ENCODE measurements at regions of chr13 and their contacts with region 1.

Region 1: DNA sequence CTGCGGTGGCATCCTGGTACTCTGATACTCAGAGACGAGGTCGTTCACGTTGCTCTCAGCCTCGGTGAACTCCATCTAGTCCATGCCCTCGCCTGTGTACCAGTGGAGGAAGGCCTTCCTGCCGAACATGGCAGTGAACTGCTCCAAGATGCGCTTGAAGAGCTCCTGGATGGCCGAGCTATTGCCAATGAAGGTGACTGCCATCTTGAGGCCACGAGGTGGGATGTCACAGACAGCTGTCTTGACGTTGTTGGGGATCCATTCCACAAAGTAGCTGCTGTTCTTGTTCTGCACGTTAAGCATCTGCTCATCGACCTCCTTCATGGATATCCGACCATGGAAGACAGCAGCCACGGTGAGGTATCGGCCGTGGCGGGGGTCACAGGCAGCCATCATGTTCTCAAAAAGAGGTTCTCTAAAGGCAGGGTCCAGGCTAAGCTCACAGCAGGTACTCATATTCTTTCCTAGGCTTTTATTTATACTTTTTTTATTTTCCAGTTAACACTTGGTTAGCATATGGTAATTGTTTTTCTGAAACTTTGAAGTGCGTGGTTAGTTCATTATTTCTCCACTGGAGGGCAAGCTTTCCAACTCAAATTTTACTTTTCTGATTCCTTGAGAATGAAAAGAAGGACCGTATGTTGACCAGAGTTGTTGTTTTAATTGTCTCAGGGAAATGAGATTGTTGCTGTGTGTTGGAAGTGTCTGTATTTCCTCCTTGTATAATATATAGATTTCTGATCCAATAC is 72.4 kb upstream of the RGCC start:
- DNase-seq: no peak
- H3K4me3 ChIP-seq: no peak overlapping the region
- H3K27ac ChIP-seq: no peak overlapping the region
- H3K4me1 ChIP-seq: no peaks in the 10 kb centered on the region
- H3K27me3 ChIP-seq: no peaks in the 10 kb centered on the region
- CTCF ChIP-seq: peak in 4 of 6 experiments; percentile 28 to 45 (median 44)
- POLR2A ChIP-seq: no peak

Region 2: GRCh38 chr13:41443966-41444365 is 59.0 kb after region 1 on chr13:
- intact Hi-C with region 1: no loop called
- DNase-seq: no peak
- H3K4me3 ChIP-seq: no peak overlapping the region
- H3K27ac ChIP-seq: no peak overlapping the region
- H3K4me1 ChIP-seq: no peaks in the 10 kb centered on the region
- H3K27me3 ChIP-seq: no peaks in the 10 kb centered on the region
- CTCF ChIP-seq: no peak
- POLR2A ChIP-seq: no peak

Region 3: DNA sequence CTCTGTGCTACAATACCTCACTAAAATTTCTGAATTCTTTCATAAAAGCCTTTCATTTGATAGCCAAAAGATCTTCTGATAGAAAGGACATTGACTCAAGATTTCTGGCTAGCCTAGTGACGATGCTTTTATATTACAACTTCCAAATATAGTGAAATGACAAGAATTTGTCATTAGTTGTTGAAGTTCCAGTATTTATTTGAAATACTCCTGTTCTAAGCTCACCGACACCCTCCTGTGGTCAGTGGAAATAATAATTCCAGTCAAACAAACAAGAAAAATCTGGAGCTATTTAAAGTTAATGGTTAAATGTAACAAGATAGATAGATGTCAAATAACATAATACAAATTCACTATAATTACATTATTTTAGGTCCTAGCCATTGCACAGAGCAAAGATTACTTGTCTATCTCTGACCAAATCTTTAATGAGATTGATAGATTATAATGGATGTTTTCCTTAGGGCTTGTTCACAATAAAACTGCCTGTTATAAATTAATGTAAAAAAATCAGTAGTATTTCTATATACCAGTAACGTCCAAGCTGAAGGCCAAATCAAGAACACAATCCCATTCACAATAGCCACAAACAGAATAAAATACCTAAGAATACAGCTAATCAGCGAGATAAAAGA is 267.9 kb after region 1 on chr13:
- intact Hi-C with region 1: loop called in 1 of 2 experiments (anchors 10 kb)
- DNase-seq: peak in 5 of 7 donors; percentile 30 to 57 (median 39)
- H3K4me3 ChIP-seq: no peak overlapping the region
- H3K27ac ChIP-seq: no peak overlapping the region
- H3K4me1 ChIP-seq: peaks cover 0 to 8% of the 10 kb centered on the region in 2 donors
- H3K27me3 ChIP-seq: no peaks in the 10 kb centered on the region
- CTCF ChIP-seq: peak; percentile 38 to 81 (median 73)
- POLR2A ChIP-seq: no peak

Region 4: GRCh38 chr13:41942462-41943094 is 557.6 kb after region 1 on chr13:
- intact Hi-C with region 1: no loop called
- DNase-seq: peak in 2 of 7 donors; percentile 20 to 25
- H3K4me3 ChIP-seq: no peak overlapping the region
- H3K27ac ChIP-seq: no peak overlapping the region
- H3K4me1 ChIP-seq: peaks cover 4 to 18% of the 10 kb centered on the region in 2 donors
- H3K27me3 ChIP-seq: no peaks in the 10 kb centered on the region
- CTCF ChIP-seq: peak in 2 of 6 experiments; percentile 28
- POLR2A ChIP-seq: no peak

Measured in adrenal gland (tissue), 19 donors.